MCF 10A (cell line): ENCODE measurements at regions of chr3 and their contacts with region 1.

Region 1: GRCh38 chr3:187745201-187746058 is at the start of gene BCL6:
- DNase-seq: peak; percentile 98
- H3K4me3 Mint-ChIP-seq: peak within 1 kb of the TSS; percentile 98
- H3K27ac Mint-ChIP-seq: peak within 1 kb of the TSS; percentile 100
- H3K4me1 Mint-ChIP-seq: peaks cover 15% of the 10 kb centered on the region
- H3K27me3 Mint-ChIP-seq: no peaks in the 10 kb centered on the region
- CTCF ChIP-seq: no peak
- total RNA-seq, gene BCL6: 16.4 and 20.9 TPM in 2 replicates

Region 2: DNA sequence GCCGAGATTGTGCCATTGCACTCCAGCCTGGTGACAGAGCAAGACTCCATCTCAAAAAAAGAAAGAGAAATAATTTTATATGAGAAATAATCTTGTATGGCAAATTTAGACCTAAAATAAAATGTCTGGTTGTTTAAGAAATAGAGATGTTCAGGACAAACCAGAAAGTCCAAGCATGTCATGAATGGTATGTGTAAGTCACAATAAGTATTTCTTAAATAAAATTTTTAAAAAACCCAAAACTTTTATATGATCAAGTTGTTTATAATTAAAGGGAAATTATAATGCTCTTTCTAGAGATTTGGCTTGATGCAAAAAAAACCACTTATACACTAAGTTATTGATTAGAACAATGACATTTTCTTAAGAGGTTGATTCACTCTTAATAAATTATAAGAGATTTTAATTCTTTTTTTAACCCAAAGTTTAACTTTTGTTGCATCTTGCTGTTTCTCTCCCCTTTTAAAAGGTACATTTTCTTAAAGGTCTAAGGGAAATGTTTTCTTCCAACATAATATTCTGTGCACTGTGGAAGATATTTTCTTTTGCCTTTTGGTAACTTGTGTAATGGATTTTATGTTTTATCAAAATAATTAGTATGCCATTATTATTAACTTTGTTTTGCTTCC is 271.5 kb before region 1 on chr3:
- CTCF ChIA-PET with region 1: no interaction called
- POLR2A ChIA-PET with region 1: no interaction called
- intact Hi-C with region 1: no loop called
- DNase-seq: peak; percentile 17
- H3K4me3 Mint-ChIP-seq: no peak overlapping the region
- H3K27ac Mint-ChIP-seq: no peak overlapping the region
- H3K4me1 Mint-ChIP-seq: no peaks in the 10 kb centered on the region
- H3K27me3 Mint-ChIP-seq: peaks cover 15% of the 10 kb centered on the region
- CTCF ChIP-seq: no peak

Region 3: GRCh38 chr3:187850331-187850921 is 105.0 kb after region 1 on chr3:
- CTCF ChIA-PET with region 1: interaction called, 4 read pairs
- POLR2A ChIA-PET with region 1: interaction called, 17 read pairs
- intact Hi-C with region 1: no loop called
- DNase-seq: peak; percentile 92
- H3K4me3 Mint-ChIP-seq: peak overlapping the region; percentile 54
- H3K27ac Mint-ChIP-seq: peak overlapping the region; percentile 94
- H3K4me1 Mint-ChIP-seq: peaks cover 25% of the 10 kb centered on the region
- H3K27me3 Mint-ChIP-seq: no peaks in the 10 kb centered on the region
- CTCF ChIP-seq: no peak

Region 4: DNA sequence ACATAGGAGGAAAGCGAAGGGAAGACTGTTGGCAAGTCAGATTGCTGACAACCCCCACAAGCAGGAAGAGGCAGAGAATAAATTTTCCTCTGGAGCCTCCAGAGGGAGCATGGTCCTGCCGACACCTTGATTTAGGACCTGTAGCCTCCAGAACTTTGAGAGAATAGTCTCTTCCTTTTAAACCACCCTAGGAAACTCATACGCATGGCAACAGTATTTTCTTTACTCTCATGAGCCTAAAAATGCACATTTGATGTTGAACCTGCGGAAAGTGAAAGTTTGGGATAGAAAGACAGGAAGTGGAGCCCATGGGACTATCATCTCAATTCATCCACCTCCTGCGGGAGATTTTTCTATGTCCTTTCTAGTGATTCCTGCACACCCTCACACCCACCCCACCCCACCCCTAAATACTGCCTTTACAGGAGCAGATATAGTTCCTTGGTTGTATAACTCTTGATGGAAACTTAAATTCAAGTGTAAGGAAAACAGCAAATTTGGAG is 291.8 kb after region 1 on chr3:
- CTCF ChIA-PET with region 1: no interaction called
- POLR2A ChIA-PET with region 1: no interaction called
- intact Hi-C with region 1: loop called (anchors 2 kb)
- DNase-seq: peak; percentile 64
- H3K4me3 Mint-ChIP-seq: no peak overlapping the region
- H3K27ac Mint-ChIP-seq: no peak overlapping the region
- H3K4me1 Mint-ChIP-seq: peaks cover 19% of the 10 kb centered on the region
- H3K27me3 Mint-ChIP-seq: no peaks in the 10 kb centered on the region
- CTCF ChIP-seq: peak; percentile 38

Region 5: GRCh38 chr3:188348435-188349244 is 603.2 kb after region 1 on chr3:
- CTCF ChIA-PET with region 1: interaction called, 12 read pairs
- POLR2A ChIA-PET with region 1: interaction called, 24 read pairs
- intact Hi-C with region 1: loop called (anchors 1 kb)
- DNase-seq: peak; percentile 96
- H3K4me3 Mint-ChIP-seq: peak overlapping the region; percentile 54
- H3K27ac Mint-ChIP-seq: peak overlapping the region; percentile 46
- H3K4me1 Mint-ChIP-seq: peaks cover 29% of the 10 kb centered on the region
- H3K27me3 Mint-ChIP-seq: no peaks in the 10 kb centered on the region
- CTCF ChIP-seq: no peak

Region 6: GRCh38 chr3:188673646-188674186 is 928.3 kb after region 1 on chr3:
- CTCF ChIA-PET with region 1: interaction called, 25 read pairs
- POLR2A ChIA-PET with region 1: interaction called, 75 read pairs
- intact Hi-C with region 1: loop called (anchors 5 kb)
- DNase-seq: peak; percentile 95
- H3K4me3 Mint-ChIP-seq: peak overlapping the region; percentile 43
- H3K27ac Mint-ChIP-seq: peak overlapping the region; percentile 89
- H3K4me1 Mint-ChIP-seq: peaks cover 38% of the 10 kb centered on the region
- H3K27me3 Mint-ChIP-seq: no peaks in the 10 kb centered on the region
- CTCF ChIP-seq: no peak

Region 7: GRCh38 chr3:188947401-188948280 is 1202.2 kb after region 1 on chr3:
- CTCF ChIA-PET with region 1: interaction called, 240 read pairs
- POLR2A ChIA-PET with region 1: interaction called, 252 read pairs
- intact Hi-C with region 1: loop called (anchors 1 kb)
- DNase-seq: peak; percentile 99
- H3K4me3 Mint-ChIP-seq: peak overlapping the region; percentile 71
- H3K27ac Mint-ChIP-seq: peak overlapping the region; percentile 96
- H3K4me1 Mint-ChIP-seq: peaks cover 58% of the 10 kb centered on the region
- H3K27me3 Mint-ChIP-seq: no peaks in the 10 kb centered on the region
- CTCF ChIP-seq: peak; percentile 46